ENCODE measurements at regions of chr6 and their contacts with region 1.

Region 1: GRCh38 chr6:129730477-129731165 is 20.6 kb upstream of the ARHGAP18 start:
- H3K4me3 Mint-ChIP-seq: no peak overlapping the region
- H3K27ac Mint-ChIP-seq: peak overlapping the region; percentile 50
- H3K4me1 Mint-ChIP-seq: peaks cover 13% of the 10 kb centered on the region
- H3K27me3 Mint-ChIP-seq: no peaks in the 10 kb centered on the region

Region 2: GRCh38 chr6:129598244-129599187 is 132.1 kb before region 1 on chr6:
- intact Hi-C with region 1: loop called (anchors 1 kb)
- H3K4me3 Mint-ChIP-seq: no peak overlapping the region
- H3K27ac Mint-ChIP-seq: no peak overlapping the region
- H3K4me1 Mint-ChIP-seq: peaks cover 11% of the 10 kb centered on the region
- H3K27me3 Mint-ChIP-seq: no peaks in the 10 kb centered on the region

Measured in dendritic cell treated with granulocyte-macrophage colony-stimulating factor and Interleukin-4, amounts not matched to agents 40 ng/mL and 50 ng/mL, for 4 days (primary cell).